ENCODE measurements at regions of chr15 and their contacts with region 1.

Region 1: GRCh38 chr15:75367913-75368688 is at the start of gene MAN2C1:
- DNase-seq: peak; percentile 98
- H3K4me3 ChIP-seq: peak within 1 kb of the TSS; percentile 69 to 83 (median 80)
- H3K27ac ChIP-seq: peak within 1 kb of the TSS; percentile 89 to 100 (median 96)
- H3K4me1 ChIP-seq: peaks cover 20 to 29% (median 21%) of the 10 kb centered on the region in 4 donors
- H3K27me3 ChIP-seq: no peaks in the 10 kb centered on the region
- CTCF ChIP-seq: peak; percentile 73 to 86 (median 79)
- EP300 ChIP-seq: no peak
- POLR2A ChIP-seq: no peak
- total RNA-seq, gene MAN2C1: 67.4 to 163 (median 125) TPM

Region 2: GRCh38 chr15:75639709-75640482 is 271.8 kb after region 1 on chr15 and contains the start of gene IMP3:
- intact Hi-C with region 1: loop called (anchors 10 kb)
- DNase-seq: peak; percentile 99
- H3K4me3 ChIP-seq: peak within 1 kb of the TSS; percentile 86 to 97 (median 89)
- H3K27ac ChIP-seq: peak within 1 kb of the TSS; percentile 87 to 98 (median 94)
- H3K4me1 ChIP-seq: peaks cover 32 to 44% (median 40%) of the 10 kb centered on the region in 4 donors
- H3K27me3 ChIP-seq: no peaks in the 10 kb centered on the region
- CTCF ChIP-seq: peak in 1 of 3 experiments; percentile 20
- EP300 ChIP-seq: no peak
- POLR2A ChIP-seq: peak; percentile 73
- total RNA-seq, gene IMP3: 49.0 to 83.5 (median 62.1) TPM